GM13976 (cell line): ENCODE measurements at regions of chr19 and their contacts with region 1.

Region 1: DNA sequence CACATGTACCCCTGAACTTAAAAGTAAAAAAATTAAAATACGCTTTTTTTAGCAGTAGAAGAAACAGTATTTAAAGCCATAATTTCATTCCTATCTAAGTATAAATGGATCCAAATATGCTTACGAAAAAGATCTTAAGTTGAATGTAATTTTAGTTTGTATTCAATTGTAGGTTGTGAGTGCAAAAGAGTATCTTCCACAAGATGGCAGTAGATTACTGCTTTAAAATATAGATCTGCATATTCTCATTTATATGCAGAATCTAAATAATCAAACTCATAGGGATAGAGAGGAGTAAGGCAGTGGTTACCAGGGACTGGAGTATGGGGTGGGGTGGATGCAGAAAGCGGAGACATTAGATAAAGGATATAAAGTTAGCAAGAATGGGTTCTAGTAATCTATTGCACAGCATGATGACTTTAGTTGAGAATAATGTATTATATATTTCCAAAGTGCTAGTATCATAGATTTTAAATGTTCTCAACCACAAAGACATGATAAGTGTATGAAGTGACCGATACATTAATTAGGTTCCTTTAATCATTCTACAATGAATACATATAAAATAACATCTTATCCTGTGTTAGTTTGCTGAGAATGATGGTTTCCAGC is 14.2 kb downstream of the OR7A17 start:
- DNase-seq: peak; percentile 42
- CTCF ChIP-seq: no peak

Region 2: DNA sequence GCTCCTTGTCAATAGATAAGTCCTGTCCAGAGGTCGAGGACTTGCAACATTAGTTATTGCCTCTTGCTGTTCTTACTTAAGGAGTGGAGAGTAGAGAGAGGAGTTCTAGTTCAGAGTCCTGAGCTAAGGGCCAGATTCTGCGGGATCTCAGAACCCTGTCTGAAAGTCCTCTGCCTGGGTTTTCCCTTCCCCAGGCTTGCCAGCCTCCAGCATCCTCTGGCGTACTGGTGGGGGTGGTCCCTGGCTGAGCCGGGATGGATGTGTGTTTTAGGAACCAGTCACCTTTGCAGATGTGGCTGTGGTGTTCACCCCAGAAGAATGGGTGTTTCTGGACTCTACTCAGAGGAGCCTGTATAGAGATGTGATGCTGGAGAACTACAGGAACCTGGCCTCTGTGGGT is 155.9 kb before region 1 on chr19:
- in situ Hi-C with region 1: no loop called
- DNase-seq: no peak
- CTCF ChIP-seq: no peak

Region 3: GRCh38 chr19:15154002-15154612 is 282.4 kb after region 1 on chr19:
- in situ Hi-C with region 1: loop called (anchors 10 kb)
- DNase-seq: no peak
- CTCF ChIP-seq: peak; percentile 34